CD14-positive monocyte (primary cell): ENCODE measurements at regions of chr14 and their contacts with region 1.

Region 1: GRCh38 chr14:105589161-105590062 is 63.0 kb downstream of the TMEM121 start:
- DNase-seq: no peak
- H3K4me3 ChIP-seq: no peak overlapping the region
- H3K4me3 Mint-ChIP-seq: no peak overlapping the region
- H3K27ac ChIP-seq: no peak overlapping the region
- H3K27ac Mint-ChIP-seq: no peak overlapping the region
- H3K4me1 ChIP-seq: no peaks in the 10 kb centered on the region
- H3K4me1 Mint-ChIP-seq: no peaks in the 10 kb centered on the region
- H3K27me3 ChIP-seq: no peaks in the 10 kb centered on the region
- H3K27me3 Mint-ChIP-seq: peaks cover 0 to 3% (median 2%) of the 10 kb centered on the region in 3 donors
- CTCF ChIP-seq: no peak

Region 2: DNA sequence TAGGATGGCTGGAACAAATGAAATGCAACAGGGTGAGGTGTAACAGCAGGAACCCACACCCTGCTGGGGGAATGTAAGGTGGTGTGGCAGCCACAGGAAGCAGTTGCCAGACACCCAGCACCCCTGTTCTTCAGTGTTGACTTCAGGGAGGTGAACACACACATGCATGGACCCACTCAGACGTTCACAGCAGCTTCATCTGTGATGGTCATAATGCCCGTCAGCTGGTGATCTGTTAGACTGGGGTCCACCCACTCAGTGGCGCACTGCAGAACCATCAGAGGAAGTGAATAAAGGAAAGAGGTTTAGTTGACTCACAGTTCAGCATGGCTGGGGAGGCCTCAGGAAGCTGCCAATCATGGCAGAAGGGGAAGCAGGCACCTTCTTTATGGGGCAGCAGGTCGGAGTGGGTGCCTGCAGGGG is 213.8 kb before region 1 on chr14:
- intact Hi-C with region 1: no loop called
- DNase-seq: peak; percentile 79 to 82 (median 81)
- H3K4me3 ChIP-seq: peak overlapping the region in 1 of 3 experiments; percentile 34
- H3K4me3 Mint-ChIP-seq: peak overlapping the region in 1 of 2 donors; percentile 55
- H3K27ac ChIP-seq: peak overlapping the region; percentile 1 to 72
- H3K27ac Mint-ChIP-seq: peak overlapping the region; percentile 80 to 90 (median 86)
- H3K4me1 ChIP-seq: peaks cover 16 to 25% of the 10 kb centered on the region in 2 donors
- H3K4me1 Mint-ChIP-seq: peaks cover 15% of the 10 kb centered on the region
- H3K27me3 ChIP-seq: no peaks in the 10 kb centered on the region
- H3K27me3 Mint-ChIP-seq: peaks cover 0 to 2% (median 2%) of the 10 kb centered on the region in 3 donors
- CTCF ChIP-seq: no peak

Region 3: GRCh38 chr14:105549481-105549880 is 39.9 kb before region 1 on chr14:
- intact Hi-C with region 1: no loop called
- DNase-seq: no peak
- H3K4me3 ChIP-seq: no peak overlapping the region
- H3K4me3 Mint-ChIP-seq: no peak overlapping the region
- H3K27ac ChIP-seq: no peak overlapping the region
- H3K27ac Mint-ChIP-seq: no peak overlapping the region
- H3K4me1 ChIP-seq: no peaks in the 10 kb centered on the region
- H3K4me1 Mint-ChIP-seq: no peaks in the 10 kb centered on the region
- H3K27me3 ChIP-seq: no peaks in the 10 kb centered on the region
- H3K27me3 Mint-ChIP-seq: peaks cover 2 to 7% (median 3%) of the 10 kb centered on the region in 3 donors
- CTCF ChIP-seq: no peak

Region 4: GRCh38 chr14:105709281-105710118 is 120.1 kb after region 1 on chr14:
- intact Hi-C with region 1: loop called in 1 of 2 experiments (anchors 2 kb)
- DNase-seq: no peak
- H3K4me3 ChIP-seq: no peak overlapping the region
- H3K4me3 Mint-ChIP-seq: no peak overlapping the region
- H3K27ac ChIP-seq: peak overlapping the region in 1 of 2 donors; percentile 78
- H3K27ac Mint-ChIP-seq: peak overlapping the region in 3 of 7 donors; percentile 14 to 84 (median 15)
- H3K4me1 ChIP-seq: peaks cover 0 to 5% of the 10 kb centered on the region in 2 donors
- H3K4me1 Mint-ChIP-seq: no peaks in the 10 kb centered on the region
- H3K27me3 ChIP-seq: no peaks in the 10 kb centered on the region
- H3K27me3 Mint-ChIP-seq: peaks cover 0 to 5% (median 0%) of the 10 kb centered on the region in 3 donors
- CTCF ChIP-seq: no peak

Region 5: GRCh38 chr14:105773995-105774394 is 184.6 kb after region 1 on chr14:
- intact Hi-C with region 1: no loop called
- DNase-seq: no peak
- H3K4me3 ChIP-seq: no peak overlapping the region
- H3K4me3 Mint-ChIP-seq: no peak overlapping the region
- H3K27ac ChIP-seq: no peak overlapping the region
- H3K27ac Mint-ChIP-seq: peak overlapping the region in 1 of 7 donors; percentile 43
- H3K4me1 ChIP-seq: no peaks in the 10 kb centered on the region
- H3K4me1 Mint-ChIP-seq: no peaks in the 10 kb centered on the region
- H3K27me3 ChIP-seq: no peaks in the 10 kb centered on the region
- H3K27me3 Mint-ChIP-seq: peaks cover 2 to 5% (median 2%) of the 10 kb centered on the region in 3 donors
- CTCF ChIP-seq: no peak